Psoas muscle (tissue), 8 donors: ENCODE measurements at regions of chr15 and their contacts with region 1.

Region 1: GRCh38 chr15:71448688-71449114 is 333.4 kb downstream of the THSD4 start:
- DNase-seq: no peak
- ATAC-seq: peak; percentile 61 to 82 (median 73)
- H3K4me3 ChIP-seq: no peak overlapping the region
- H3K27ac ChIP-seq: no peak overlapping the region
- H3K4me1 ChIP-seq: peaks cover 5% of the 10 kb centered on the region
- H3K27me3 ChIP-seq: no peaks in the 10 kb centered on the region
- CTCF ChIP-seq: peak; percentile 88

Region 2: DNA sequence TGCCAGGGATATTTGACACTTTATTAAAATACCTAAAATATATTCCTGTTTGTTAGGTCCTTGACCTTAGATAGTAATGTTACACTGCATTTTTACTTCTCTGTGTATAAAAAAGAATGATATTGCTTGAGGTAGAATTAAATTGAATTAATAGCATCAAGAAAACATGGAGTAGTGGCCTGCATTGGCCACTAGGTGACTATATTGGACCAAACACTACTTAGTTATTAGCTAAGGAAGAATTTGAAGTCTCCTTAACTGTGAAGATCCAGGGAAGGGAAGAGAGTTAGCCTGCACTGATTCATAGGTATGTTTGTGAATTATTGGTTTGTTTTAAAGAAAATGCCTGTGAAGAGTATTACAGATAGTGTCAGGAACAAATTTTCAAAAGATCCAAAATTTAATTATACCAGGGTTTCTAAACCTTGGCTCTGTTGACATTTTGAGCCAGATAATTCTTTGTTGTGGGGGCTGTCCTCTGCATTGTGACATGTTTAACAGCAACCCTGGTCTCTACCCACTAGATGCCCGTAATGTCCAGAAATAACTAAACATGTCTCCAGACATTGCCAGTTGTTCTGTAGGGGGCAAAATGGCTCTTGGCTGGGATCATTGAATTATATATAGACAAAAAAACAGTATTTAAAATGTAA is 437.1 kb before region 1 on chr15:
- intact Hi-C with region 1: loop called (anchors 5 to 10 kb)
- DNase-seq: no peak
- ATAC-seq: peak in 3 of 4 donors; percentile 49 to 77 (median 49)
- H3K4me3 ChIP-seq: no peak overlapping the region
- H3K27ac ChIP-seq: no peak overlapping the region
- H3K4me1 ChIP-seq: no peaks in the 10 kb centered on the region
- H3K27me3 ChIP-seq: no peaks in the 10 kb centered on the region
- CTCF ChIP-seq: peak; percentile 64

Region 3: DNA sequence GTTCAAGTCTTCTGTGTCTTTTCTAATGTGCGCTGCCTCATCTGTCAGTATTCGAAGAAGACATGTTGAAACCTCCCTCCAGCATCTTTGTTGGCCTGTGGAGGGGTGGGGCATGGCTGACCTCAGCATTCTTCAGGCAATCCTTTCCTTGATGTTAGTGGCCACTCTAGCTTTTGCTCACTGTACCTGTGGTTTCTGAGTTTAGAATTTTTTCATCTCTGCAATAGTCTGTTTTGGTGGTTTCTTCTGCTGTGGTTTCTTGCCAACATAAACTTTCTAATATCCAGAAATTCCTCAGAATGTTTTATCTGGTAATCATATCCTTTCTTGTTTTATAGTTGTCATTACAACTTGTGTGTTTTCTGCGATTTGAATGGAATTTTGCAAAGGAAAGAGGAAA is 110.4 kb after region 1 on chr15:
- intact Hi-C with region 1: no loop called
- DNase-seq: no peak
- ATAC-seq: no peak
- H3K4me3 ChIP-seq: no peak overlapping the region
- H3K27ac ChIP-seq: no peak overlapping the region
- H3K4me1 ChIP-seq: no peaks in the 10 kb centered on the region
- H3K27me3 ChIP-seq: no peaks in the 10 kb centered on the region
- CTCF ChIP-seq: no peak

Region 4: GRCh38 chr15:71651750-71652186 is 203.1 kb after region 1 on chr15:
- intact Hi-C with region 1: loop called in 1 of 2 experiments (anchors 2 kb)
- DNase-seq: no peak
- ATAC-seq: no peak
- H3K4me3 ChIP-seq: no peak overlapping the region
- H3K27ac ChIP-seq: no peak overlapping the region
- H3K4me1 ChIP-seq: no peaks in the 10 kb centered on the region
- H3K27me3 ChIP-seq: no peaks in the 10 kb centered on the region
- CTCF ChIP-seq: peak; percentile 30

Region 5: DNA sequence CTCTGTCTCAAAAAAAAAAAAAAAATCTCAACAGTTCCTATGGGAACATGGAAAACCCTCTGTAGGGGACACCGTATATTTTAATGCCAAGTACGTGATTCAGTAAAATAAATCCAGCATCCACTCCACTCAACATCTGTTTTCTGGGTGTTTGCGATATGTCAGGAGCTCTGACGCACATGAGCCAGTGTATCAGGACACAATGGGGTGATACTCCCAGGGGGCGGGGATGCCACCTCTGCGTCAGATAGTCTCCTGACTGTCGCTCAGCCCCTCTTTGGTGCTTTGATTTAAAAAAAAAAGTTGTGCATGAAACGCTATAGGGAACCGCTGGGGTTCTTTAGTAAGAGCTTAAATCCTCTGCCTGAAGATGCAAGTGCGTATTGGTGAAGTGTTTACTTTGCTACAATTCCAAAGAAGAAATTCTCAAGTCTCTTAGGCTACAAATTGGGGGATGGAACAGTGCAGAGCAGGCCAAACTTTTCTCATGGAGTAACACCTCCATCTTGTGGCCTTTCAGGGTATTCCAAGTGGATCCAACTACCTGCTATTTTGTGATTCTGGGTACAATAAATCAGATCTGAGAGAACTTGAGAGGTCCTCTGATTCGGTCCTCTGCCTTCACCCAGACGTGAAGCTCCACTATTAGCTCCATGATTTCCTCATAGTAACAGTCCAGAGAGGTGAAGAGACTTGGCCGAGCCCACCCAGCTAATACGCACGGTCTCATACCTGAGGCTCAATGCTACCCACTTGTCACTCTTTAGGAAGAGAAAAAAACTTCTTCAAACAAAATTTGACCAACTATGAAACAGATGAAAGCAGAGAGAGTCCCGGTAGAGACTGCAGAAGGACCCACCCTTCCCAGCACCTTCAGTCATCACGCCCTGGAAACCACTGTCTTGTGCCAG is 352.4 kb after region 1 on chr15:
- intact Hi-C with region 1: loop called in 1 of 2 experiments (anchors 5 kb)
- DNase-seq: no peak
- ATAC-seq: peak; percentile 68 to 82 (median 77)
- H3K4me3 ChIP-seq: no peak overlapping the region
- H3K27ac ChIP-seq: no peak overlapping the region
- H3K4me1 ChIP-seq: no peaks in the 10 kb centered on the region
- H3K27me3 ChIP-seq: no peaks in the 10 kb centered on the region
- CTCF ChIP-seq: peak; percentile 80